HEK293T (cell line): ENCODE measurements at regions of chr17 and their contacts with region 1.

Region 1: GRCh38 chr17:10198509-10199253 is at the start of gene GAS7:
- DNase-seq: peak; percentile 68

Region 2: DNA sequence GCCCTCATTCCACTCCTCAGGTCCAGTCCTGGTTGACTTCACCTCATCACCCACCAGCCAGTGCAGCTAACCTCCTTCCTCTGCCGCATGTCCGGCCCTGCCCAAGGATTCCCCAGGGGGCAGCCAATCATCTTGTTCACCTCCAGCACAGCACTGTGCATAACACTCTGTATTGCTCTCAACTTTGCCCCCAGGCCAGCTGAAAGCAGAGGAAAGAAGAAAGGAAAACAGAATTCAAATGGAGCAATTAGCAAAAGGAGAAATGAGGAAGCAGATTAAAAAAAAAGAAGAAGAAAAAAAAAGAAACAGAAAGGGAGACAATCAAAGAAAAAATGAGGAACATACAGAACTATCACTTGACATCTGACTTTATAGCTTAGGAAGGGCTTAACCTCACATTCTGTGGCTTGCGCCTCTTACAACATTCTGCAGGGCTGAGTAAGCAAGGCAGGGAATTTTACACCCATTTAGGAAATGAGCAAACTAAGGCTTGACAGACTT is 26.4 kb before region 1 on chr17:
- CTCF ChIA-PET with region 1: interaction called, 10 read pairs
- POLR2A ChIA-PET with region 1: no interaction called
- DNase-seq: no peak

Region 3: GRCh38 chr17:10186771-10187411 is 11.8 kb before region 1 on chr17:
- CTCF ChIA-PET with region 1: no interaction called
- POLR2A ChIA-PET with region 1: no interaction called
- DNase-seq: no peak

Region 4: GRCh38 chr17:10224582-10225195 is 26.0 kb after region 1 on chr17:
- CTCF ChIA-PET with region 1: no interaction called
- POLR2A ChIA-PET with region 1: no interaction called
- DNase-seq: no peak

Region 5: DNA sequence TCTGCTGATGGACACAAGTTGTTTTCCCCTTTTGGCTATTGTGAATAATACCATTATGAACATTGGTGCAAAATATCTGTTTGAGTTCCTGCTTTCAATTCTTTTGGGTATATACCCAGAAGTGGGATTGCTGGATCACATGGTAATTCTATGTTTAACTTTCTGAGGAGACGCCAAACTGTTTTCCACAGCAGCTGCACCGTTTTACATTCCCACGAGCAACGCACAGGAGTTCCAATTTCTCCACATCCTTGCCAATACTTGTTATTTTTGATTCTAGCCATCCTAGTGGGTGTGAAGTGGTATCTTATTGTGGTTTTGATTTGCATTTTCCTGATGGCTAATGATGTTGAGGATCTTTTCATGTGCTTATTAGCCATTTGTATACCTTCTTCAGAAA is 43.1 kb after region 1 on chr17:
- CTCF ChIA-PET with region 1: no interaction called
- POLR2A ChIA-PET with region 1: no interaction called
- DNase-seq: no peak